Aorta (tissue), 5 donors: ENCODE measurements at regions of chr16 and their contacts with region 1.

Region 1: GRCh38 chr16:73093146-73094144 is 45.5 kb upstream of the ZFHX3 start:
- DNase-seq: peak; percentile 68 to 84
- ATAC-seq: peak; percentile 82
- H3K4me3 ChIP-seq: peak overlapping the region in 1 of 2 donors; percentile 21
- H3K27ac ChIP-seq: peak overlapping the region; percentile 94 to 98
- H3K4me1 ChIP-seq: peaks cover 0 to 7% of the 10 kb centered on the region in 2 donors
- H3K27me3 ChIP-seq: no peaks in the 10 kb centered on the region

Region 2: GRCh38 chr16:73058221-73058615 is 35.2 kb before region 1 on chr16:
- intact Hi-C with region 1: loop called (anchors 5 kb)
- DNase-seq: peak; percentile 73 to 84
- ATAC-seq: no peak
- H3K4me3 ChIP-seq: peak overlapping the region; percentile 77 to 100
- H3K27ac ChIP-seq: peak overlapping the region; percentile 92 to 100
- H3K4me1 ChIP-seq: no peaks in the 10 kb centered on the region
- H3K27me3 ChIP-seq: no peaks in the 10 kb centered on the region

Region 3: DNA sequence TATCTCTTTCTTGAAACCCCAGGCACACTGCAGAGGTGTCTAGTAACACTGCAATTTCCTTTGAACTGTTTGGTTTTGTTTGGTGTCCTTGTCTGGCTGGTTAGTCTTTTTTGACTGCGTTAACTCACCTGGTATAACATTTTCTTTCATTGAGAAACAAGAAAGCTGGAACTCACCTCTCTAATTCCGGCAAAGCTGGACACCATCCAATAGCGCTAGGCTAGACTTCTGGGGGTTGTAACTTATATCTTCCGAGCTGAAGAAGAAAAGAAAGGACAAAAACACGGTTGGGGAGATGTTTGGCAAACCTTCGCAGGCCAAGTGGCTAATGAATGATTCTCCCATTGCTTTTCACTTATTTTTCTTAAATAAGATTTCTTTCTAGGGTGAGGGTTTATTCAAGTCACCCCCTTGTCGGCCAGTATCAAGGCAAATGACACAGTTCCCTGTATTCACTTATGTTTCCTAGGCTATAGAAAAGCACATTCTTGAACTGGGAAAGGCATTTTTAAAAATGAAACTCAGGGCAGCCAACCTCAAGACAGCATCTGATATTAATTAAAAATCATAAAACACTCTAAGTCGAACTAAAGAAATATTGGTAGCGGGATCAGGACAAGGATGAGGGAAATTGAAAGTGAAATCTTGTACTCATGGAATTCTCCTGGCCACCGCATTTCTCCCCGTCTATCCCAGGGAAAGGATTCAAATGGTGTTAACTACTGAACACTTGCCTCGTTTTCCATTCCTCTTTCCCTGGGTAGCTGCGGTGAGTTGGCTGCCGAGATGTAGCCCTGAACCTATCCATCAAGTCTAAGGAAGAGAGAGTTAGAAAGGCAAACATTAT is 50.4 kb after region 1 on chr16:
- intact Hi-C with region 1: loop called in 1 of 2 experiments (anchors 5 kb)
- DNase-seq: no peak
- ATAC-seq: peak; percentile 23
- H3K4me3 ChIP-seq: peak overlapping the region; percentile 72 to 90
- H3K27ac ChIP-seq: peak overlapping the region; percentile 51 to 79
- H3K4me1 ChIP-seq: no peaks in the 10 kb centered on the region
- H3K27me3 ChIP-seq: no peaks in the 10 kb centered on the region

Region 4: DNA sequence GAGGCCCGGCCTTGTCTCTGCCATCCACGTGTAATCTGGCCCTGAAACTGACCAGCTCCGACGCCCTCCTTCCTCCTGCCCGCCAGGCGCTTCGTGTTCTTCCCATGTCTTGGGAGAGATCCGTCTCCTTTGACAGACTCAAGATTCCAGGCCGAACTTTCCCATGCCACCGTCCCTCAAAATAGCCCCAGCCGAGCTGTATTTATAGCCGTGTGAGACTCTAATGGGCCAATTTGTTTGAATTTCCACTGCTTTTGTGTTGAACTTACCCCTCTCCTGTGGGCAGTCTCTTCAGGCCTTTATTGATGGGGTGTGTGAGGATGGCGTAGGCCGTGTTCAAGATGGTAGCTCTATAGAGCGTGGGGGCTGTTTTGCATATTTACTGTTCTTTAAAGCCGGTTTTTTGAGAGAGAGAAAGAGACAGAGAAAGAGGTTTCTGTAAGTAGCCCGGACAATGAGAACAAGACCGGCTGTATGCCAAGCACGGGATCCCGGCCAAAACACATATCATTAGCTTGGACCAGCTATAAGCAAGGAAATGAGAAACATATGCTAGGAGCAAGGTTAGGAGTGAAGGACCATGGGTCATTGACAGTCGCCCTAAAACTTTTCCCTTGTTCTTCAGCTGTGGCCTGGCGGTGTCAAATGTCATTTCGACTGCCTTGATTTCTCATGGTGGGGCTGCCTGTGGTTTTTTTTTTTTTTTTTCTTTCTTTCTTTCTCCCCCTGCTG is 79.0 kb after region 1 on chr16:
- intact Hi-C with region 1: loop called (anchors 5 kb)
- DNase-seq: peak; percentile 83 to 93
- ATAC-seq: peak; percentile 73
- H3K4me3 ChIP-seq: no peak overlapping the region
- H3K27ac ChIP-seq: peak overlapping the region; percentile 76 to 94
- H3K4me1 ChIP-seq: peaks cover 0 to 5% of the 10 kb centered on the region in 2 donors
- H3K27me3 ChIP-seq: no peaks in the 10 kb centered on the region